ENCODE measurements at regions of chr10 and their contacts with region 1.

Region 1: DNA sequence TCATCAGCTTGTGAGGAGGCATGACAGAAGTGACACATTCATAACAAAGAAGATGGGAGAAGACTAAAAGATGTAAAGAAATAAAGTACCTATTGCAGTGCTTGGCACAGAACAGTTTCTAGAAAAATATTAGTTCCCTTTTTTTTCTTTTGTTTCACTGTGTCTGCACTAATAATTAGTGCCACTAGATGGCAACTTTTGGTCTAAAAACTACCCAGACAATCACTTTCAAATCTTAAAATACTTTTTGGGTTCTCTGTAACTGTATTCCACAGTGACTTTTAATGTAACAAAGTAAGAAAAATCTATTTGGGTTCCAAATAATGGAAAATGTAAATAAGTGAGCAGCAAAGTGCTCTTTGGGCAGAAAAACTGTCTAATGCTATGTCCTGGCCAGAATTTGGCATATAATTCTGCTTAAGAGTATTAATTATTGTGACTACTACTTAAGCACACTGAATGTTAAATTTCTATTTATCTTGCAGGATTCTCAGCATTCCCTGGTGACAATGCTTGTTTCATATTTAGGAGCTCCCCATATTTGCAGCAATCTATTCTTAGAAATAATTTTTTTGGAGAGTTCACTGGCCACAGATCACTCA is 134.8 kb upstream of the KIF5B start:
- H3K4me3 Mint-ChIP-seq: no peak overlapping the region
- H3K27ac Mint-ChIP-seq: no peak overlapping the region
- H3K4me1 Mint-ChIP-seq: peaks cover 25% of the 10 kb centered on the region
- H3K27me3 Mint-ChIP-seq: peaks cover 5% of the 10 kb centered on the region

Region 2: GRCh38 chr10:32149252-32149955 is 41.6 kb before region 1 on chr10:
- intact Hi-C with region 1: no loop called
- H3K4me3 Mint-ChIP-seq: no peak overlapping the region
- H3K27ac Mint-ChIP-seq: no peak overlapping the region
- H3K4me1 Mint-ChIP-seq: peaks cover 17% of the 10 kb centered on the region
- H3K27me3 Mint-ChIP-seq: no peaks in the 10 kb centered on the region

Region 3: DNA sequence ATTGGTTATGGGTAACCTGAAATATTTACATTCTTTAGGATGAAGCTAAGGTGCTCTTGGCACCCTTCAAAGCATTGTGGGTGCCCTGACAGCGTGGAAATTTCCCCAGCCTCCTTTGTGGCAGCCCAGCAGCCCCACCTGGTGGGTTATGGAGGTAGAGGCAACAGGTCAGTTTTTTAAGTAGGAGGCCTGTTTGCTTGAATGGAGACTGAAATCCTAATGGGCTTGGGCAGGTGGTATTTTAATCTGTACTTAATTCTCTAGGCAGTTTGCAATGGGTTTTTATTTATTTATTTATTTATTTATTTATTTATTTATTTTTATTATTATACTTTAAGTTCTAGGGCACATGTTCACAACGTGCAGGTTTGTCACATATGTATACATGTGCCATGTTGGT is 16.6 kb after region 1 on chr10:
- intact Hi-C with region 1: loop called (anchors 2 kb)
- H3K4me3 Mint-ChIP-seq: no peak overlapping the region
- H3K27ac Mint-ChIP-seq: no peak overlapping the region
- H3K4me1 Mint-ChIP-seq: peaks cover 12% of the 10 kb centered on the region
- H3K27me3 Mint-ChIP-seq: peaks cover 3% of the 10 kb centered on the region

Region 4: GRCh38 chr10:32367793-32368453 is 176.9 kb after region 1 on chr10:
- intact Hi-C with region 1: loop called (anchors 5 kb)
- H3K4me3 Mint-ChIP-seq: no peak overlapping the region
- H3K27ac Mint-ChIP-seq: no peak overlapping the region
- H3K4me1 Mint-ChIP-seq: peaks cover 23% of the 10 kb centered on the region
- H3K27me3 Mint-ChIP-seq: no peaks in the 10 kb centered on the region

Region 5: GRCh38 chr10:32687116-32687515 is 496.1 kb after region 1 on chr10:
- intact Hi-C with region 1: no loop called
- H3K4me3 Mint-ChIP-seq: no peak overlapping the region
- H3K27ac Mint-ChIP-seq: no peak overlapping the region
- H3K4me1 Mint-ChIP-seq: no peaks in the 10 kb centered on the region
- H3K27me3 Mint-ChIP-seq: no peaks in the 10 kb centered on the region